PC-3 (cell line): ENCODE measurements at regions of chr9 and their contacts with region 1.

Region 1: DNA sequence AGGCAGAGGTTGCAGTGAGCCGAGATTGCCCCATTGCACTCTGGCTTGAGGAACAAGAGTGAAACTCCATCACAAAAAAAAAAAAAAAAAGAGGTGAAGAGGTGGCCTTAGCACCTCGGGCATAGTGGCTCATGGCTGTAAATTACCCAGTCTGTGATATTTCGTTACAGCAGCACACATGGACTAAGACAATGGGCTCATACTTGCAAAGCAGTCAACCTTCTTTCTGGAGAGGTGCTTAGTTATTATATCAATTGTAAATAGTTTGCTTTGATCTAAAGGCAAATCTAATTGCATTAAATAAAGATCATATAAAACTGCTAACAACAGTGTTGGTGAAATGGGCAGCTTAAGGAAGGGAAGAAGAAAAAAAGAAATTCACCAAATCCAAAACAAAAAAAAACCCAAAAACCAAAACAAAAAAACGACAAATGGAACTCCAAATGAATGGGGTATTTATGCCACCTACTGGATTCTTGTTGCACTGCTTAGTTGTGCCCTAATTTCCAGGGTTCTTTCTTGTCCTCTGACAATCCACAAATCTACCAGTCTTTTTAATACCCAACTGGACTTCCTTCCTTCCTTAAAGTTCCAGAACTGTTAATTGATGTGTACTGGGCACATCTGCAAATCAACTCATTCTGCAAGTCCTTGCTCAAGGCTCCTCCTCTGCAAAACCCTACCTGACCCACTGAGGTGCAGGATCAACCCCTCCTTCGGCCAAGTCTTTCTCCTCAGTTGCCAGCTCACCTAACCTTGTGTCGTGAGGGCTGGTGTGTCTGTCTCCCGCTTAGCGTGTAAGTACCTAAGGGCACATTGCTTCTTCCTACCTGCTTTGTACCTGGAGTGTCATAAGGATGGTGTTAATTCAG is 35.0 kb upstream of the DMRT1 start:
- DNase-seq: peak; percentile 54
- ATAC-seq: 0 out of 2 replicates have a peak, but pooled peaks have one; percentile 17
- H3K4me3 ChIP-seq: no peak overlapping the region
- H3K27ac ChIP-seq: no peak overlapping the region
- H3K4me1 ChIP-seq: peaks cover 12% of the 10 kb centered on the region; the same call in 1 of the 2 replicates
- H3K27me3 ChIP-seq: no peaks in the 10 kb centered on the region
- CTCF ChIP-seq: peak; percentile 70

Region 2: DNA sequence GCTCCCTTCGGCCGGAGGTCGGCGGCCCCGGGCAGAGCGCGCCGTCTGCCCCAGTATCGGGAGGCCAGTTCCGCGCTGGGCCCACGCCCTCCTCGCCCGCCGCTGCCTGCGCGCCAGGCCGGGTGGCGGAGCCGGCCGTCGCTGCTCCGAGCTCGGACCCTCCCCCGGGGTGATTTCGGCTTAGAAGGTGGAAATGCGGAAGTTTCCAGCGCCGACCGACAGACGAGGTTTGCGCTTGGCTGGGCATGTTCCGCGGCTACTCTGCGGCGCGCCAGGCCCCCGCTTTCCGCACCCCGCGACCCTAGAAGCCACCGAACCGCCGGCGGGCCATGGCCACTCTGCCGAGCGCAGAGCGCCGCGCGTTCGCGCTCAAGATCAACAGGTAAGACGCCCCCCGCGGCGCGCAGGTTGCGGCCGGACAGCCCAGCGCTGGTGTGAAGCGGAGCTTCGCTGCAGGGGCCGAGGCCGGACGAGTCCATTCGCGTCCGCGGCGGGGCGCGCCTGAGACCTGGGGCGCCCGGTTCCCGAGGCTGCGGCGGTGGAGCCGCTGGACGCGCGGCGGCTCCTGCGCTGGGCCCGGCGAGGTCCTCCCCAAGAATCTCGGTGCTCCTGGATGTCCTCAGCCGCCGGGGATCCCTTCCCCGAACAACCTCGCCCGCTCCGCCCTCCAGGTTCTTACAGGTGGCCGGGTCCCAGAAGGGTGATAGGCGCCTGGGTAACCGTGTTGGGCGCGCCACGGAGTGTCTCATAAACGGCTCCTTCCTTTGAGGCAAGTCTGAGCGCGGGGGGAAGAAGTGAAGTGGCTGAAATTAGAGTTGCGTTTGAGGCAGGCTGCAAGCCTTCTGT is 591.6 kb before region 1 on chr9 and contains the start of gene DOCK8:
- CTCF ChIA-PET with region 1: no interaction called
- POLR2A ChIA-PET with region 1: interaction called, 12 read pairs
- intact Hi-C with region 1: no loop called
- DNase-seq: peak; percentile 63
- ATAC-seq: peak; percentile 94
- H3K4me3 ChIP-seq: peak within 1 kb of the TSS; percentile 79
- H3K27ac ChIP-seq: no peak within 1 kb of the TSS
- H3K4me1 ChIP-seq: peaks cover 4% of the 10 kb centered on the region; the same call in 1 of the 2 replicates
- H3K27me3 ChIP-seq: no peaks in the 10 kb centered on the region
- CTCF ChIP-seq: peak; percentile 54
- total RNA-seq, gene DOCK8: 1.5 and 1.9 TPM in 2 replicates

Region 3: DNA sequence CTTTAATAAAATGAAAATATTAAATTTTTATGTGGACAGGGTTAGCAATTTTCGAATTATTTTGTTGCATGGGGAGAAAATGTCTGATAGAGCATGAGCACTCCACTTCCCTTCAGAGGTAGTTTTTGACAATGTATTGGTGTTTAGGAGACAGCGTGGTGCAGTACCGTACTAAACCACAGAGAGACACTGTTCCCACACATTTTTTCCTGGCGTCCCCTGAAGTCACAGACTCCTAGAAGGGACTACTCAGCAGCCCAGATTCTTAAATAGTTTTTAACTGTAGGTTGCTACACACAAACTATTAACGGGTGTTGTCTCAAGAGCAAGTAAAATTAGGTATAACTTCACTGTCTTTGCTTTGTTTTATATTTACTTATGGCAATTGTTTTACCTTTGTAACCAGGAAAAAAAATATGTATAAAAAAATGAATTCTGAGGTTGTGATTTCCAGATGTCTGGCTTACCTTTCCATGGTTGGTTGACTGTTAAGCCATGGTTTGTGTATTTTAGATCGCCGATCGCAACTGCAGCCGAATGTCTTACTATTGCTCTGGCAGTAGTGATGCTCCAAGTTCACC is 420.6 kb before region 1 on chr9:
- CTCF ChIA-PET with region 1: no interaction called
- POLR2A ChIA-PET with region 1: no interaction called
- intact Hi-C with region 1: loop called (anchors 5 kb)
- DNase-seq: peak; percentile 83
- ATAC-seq: peak; percentile 91
- H3K4me3 ChIP-seq: no peak overlapping the region
- H3K27ac ChIP-seq: no peak overlapping the region
- H3K4me1 ChIP-seq: no peaks in the 10 kb centered on the region
- H3K27me3 ChIP-seq: no peaks in the 10 kb centered on the region
- CTCF ChIP-seq: peak; percentile 86

Region 4: DNA sequence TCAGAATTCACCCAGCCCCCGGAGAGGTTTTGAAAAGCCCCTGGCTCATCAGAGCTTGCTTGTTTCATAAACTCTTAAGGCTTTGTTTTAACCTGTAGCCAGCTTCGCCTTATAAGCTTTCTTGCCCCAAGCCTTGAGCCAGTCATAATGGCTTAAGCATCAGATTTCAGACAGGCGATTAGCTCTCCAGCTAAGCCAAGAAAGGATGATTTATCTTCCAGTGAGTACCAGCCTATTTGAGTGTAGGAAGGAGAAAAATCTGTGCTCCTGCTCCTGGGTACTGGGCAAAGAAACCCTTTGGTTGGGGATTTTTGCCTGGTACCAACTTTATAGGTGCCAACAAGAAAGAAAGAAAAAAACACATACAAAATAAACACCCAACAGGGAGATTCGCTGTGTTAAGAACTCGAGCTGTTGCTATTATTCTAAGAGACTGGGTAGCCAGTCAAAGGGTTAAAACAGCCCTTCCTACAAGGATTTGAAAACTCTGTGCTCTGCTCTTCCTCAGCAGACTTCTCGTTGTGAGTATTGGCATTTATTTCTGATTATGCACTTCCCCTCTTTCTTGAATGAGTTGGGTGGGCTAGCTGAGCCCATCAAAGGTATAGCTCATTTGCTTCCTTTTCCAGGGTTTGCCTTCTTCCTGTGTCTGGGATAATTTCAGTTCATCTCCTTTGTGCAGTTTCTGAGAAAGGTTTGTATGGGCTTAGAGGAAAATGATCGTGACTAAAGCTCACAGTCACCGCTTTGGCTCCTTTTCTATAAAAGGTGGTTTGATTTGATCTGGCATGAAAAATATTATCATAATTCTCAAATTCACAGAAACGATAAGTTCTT is 122.2 kb before region 1 on chr9:
- CTCF ChIA-PET with region 1: interaction called, 12 read pairs
- POLR2A ChIA-PET with region 1: no interaction called
- intact Hi-C with region 1: no loop called
- DNase-seq: peak; percentile 53
- ATAC-seq: peak; percentile 25
- H3K4me3 ChIP-seq: peak overlapping the region; percentile 63
- H3K27ac ChIP-seq: peak overlapping the region; percentile 93
- H3K4me1 ChIP-seq: peaks cover 57% of the 10 kb centered on the region
- H3K27me3 ChIP-seq: no peaks in the 10 kb centered on the region
- CTCF ChIP-seq: no peak

Region 5: GRCh38 chr9:738209-738915 is 68.2 kb before region 1 on chr9:
- CTCF ChIA-PET with region 1: no interaction called
- POLR2A ChIA-PET with region 1: no interaction called
- intact Hi-C with region 1: no loop called
- DNase-seq: peak; percentile 94
- ATAC-seq: peak; percentile 90
- H3K4me3 ChIP-seq: peak overlapping the region; percentile 26
- H3K27ac ChIP-seq: peak overlapping the region; percentile 94
- H3K4me1 ChIP-seq: peaks cover 34% of the 10 kb centered on the region
- H3K27me3 ChIP-seq: no peaks in the 10 kb centered on the region
- CTCF ChIP-seq: no peak

Region 6: GRCh38 chr9:1009101-1009707 is 202.7 kb after region 1 on chr9:
- CTCF ChIA-PET with region 1: no interaction called
- POLR2A ChIA-PET with region 1: no interaction called
- intact Hi-C with region 1: loop called (anchors 10 kb)
- DNase-seq: peak; percentile 90
- ATAC-seq: peak; percentile 97
- H3K4me3 ChIP-seq: no peak overlapping the region
- H3K27ac ChIP-seq: no peak overlapping the region
- H3K4me1 ChIP-seq: no peaks in the 10 kb centered on the region
- H3K27me3 ChIP-seq: no peaks in the 10 kb centered on the region
- CTCF ChIP-seq: peak; percentile 85